ENCODE measurements at regions of chrX and their contacts with region 1.

Region 1: GRCh38 chrX:17374619-17375366 is at the start of gene NHS:
- DNase-seq: peak; percentile 61
- ATAC-seq: peak; percentile 80
- H3K4me3 ChIP-seq: peak within 1 kb of the TSS; percentile 62 to 65
- H3K27ac ChIP-seq: peak within 1 kb of the TSS; percentile 55; the same call in 1 of the 2 replicates
- H3K4me1 ChIP-seq: peaks cover 2 to 16% of the 10 kb centered on the region in 2 experiments; a peak in 2 of 4 replicates
- H3K27me3 ChIP-seq: no peaks in the 10 kb centered on the region
- CTCF ChIP-seq: peak in 2 of 3 experiments; percentile 41 to 49; a peak in 4 of 6 replicates
- POLR2A ChIP-seq: peak; percentile 22
- RAD21 ChIP-seq: no peak
- total RNA-seq, gene NHS: 5.7 TPM

Region 2: DNA sequence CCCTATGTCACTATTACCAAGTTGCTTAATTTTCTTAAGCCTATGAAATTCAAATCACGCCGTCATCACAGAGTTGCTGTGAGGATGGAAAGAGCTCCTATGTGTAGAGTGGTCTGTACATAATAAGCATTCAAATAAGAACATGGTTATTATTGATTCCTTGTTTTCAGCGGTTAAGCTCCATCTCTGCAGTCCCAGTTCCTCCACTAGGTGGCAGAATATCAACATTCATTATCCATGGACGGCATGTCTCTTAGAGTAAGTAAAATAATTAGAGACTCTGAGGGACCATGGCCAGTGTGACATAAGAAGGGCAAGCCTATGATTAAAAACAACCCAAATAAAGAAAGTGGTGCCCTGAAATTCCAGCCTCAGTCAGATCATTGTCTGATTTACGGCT is 132.3 kb before region 1 on chrX:
- CTCF ChIA-PET with region 1: no interaction called
- POLR2A ChIA-PET with region 1: no interaction called
- RAD21 ChIA-PET with region 1: no interaction called
- intact Hi-C with region 1: loop called (anchors 5 kb)
- DNase-seq: peak; percentile 34
- ATAC-seq: peak; percentile 79
- H3K4me3 ChIP-seq: no peak overlapping the region
- H3K27ac ChIP-seq: no peak overlapping the region
- H3K4me1 ChIP-seq: no peaks in the 10 kb centered on the region
- H3K27me3 ChIP-seq: no peaks in the 10 kb centered on the region
- CTCF ChIP-seq: peak; percentile 61 to 73 (median 67)
- POLR2A ChIP-seq: no peak
- RAD21 ChIP-seq: peak; percentile 74

Region 3: GRCh38 chrX:17413228-17413627 is 38.4 kb after region 1 on chrX:
- CTCF ChIA-PET with region 1: no interaction called
- POLR2A ChIA-PET with region 1: no interaction called
- RAD21 ChIA-PET with region 1: no interaction called
- intact Hi-C with region 1: loop called (anchors 5 kb)
- DNase-seq: peak; percentile 32
- ATAC-seq: peak; percentile 46; the same call in 1 of the 2 replicates
- H3K4me3 ChIP-seq: peak overlapping the region; percentile 16 to 46
- H3K27ac ChIP-seq: peak overlapping the region; percentile 49; the same call in 1 of the 2 replicates
- H3K4me1 ChIP-seq: peaks cover 26 to 63% of the 10 kb centered on the region in 2 experiments
- H3K27me3 ChIP-seq: no peaks in the 10 kb centered on the region
- CTCF ChIP-seq: no peak
- POLR2A ChIP-seq: no peak
- RAD21 ChIP-seq: no peak

Region 4: DNA sequence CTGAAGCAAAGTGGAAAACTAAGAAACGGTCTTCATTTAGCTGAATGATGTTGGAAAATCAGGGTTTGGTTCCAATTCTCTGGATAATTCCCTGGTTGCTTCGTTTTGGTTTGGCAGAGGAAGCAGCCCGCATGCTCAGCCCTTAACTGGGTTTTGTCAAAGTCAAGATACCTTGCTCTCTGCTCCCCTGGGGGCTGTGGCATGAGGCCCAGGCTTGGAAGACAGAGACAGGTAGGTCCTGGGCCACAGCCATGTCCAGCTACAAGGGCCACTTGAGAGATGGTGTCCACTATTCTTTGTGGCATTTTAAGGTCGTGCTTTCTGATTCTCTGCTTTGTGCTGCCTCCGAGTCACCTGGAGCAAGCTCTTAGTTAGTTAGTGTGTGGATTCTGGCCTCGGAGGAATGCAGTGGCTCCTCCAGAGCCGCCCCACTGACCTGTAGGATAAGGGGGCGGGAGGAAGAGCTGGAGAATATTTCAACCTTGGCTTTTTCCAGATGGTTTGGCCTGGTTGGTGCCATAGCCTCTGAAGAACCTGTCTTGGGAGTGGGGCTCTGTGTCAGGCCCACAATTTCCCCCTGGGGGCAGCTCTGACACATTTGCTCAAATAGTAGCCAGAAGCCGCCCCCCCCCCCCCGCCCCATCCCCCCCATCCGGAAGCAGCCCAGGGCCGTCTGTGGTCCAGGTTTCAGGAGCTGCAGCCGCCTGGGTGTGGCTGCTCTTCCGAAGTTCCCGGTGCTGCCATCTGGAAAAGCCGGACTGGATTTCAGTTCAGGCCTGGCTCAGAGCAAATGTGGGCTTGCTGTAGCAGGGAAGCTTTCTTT is 147.3 kb after region 1 on chrX:
- CTCF ChIA-PET with region 1: no interaction called
- POLR2A ChIA-PET with region 1: no interaction called
- RAD21 ChIA-PET with region 1: no interaction called
- intact Hi-C with region 1: loop called (anchors 1 kb)
- DNase-seq: peak; percentile 16
- ATAC-seq: peak; percentile 87
- H3K4me3 ChIP-seq: peak overlapping the region in 1 of 2 experiments; percentile 13; a peak in 1 of 4 replicates
- H3K27ac ChIP-seq: no peak overlapping the region
- H3K4me1 ChIP-seq: peaks cover 10 to 11% of the 10 kb centered on the region in 2 experiments; a peak in 3 of 4 replicates
- H3K27me3 ChIP-seq: no peaks in the 10 kb centered on the region
- CTCF ChIP-seq: no peak
- POLR2A ChIP-seq: no peak
- RAD21 ChIP-seq: no peak; the same call in 1 of the 2 replicates

Region 5: GRCh38 chrX:17590892-17591740 is 216.3 kb after region 1 on chrX:
- CTCF ChIA-PET with region 1: interaction called, 3 read pairs
- POLR2A ChIA-PET with region 1: no interaction called
- RAD21 ChIA-PET with region 1: no interaction called
- intact Hi-C with region 1: loop called (anchors 10 kb)
- DNase-seq: peak; percentile 49
- ATAC-seq: peak; percentile 84
- H3K4me3 ChIP-seq: no peak overlapping the region
- H3K27ac ChIP-seq: no peak overlapping the region
- H3K4me1 ChIP-seq: peaks cover 0 to 8% of the 10 kb centered on the region in 2 experiments; a peak in 2 of 4 replicates
- H3K27me3 ChIP-seq: no peaks in the 10 kb centered on the region
- CTCF ChIP-seq: peak; percentile 59 to 65 (median 63); a peak in 5 of 6 replicates
- POLR2A ChIP-seq: no peak
- RAD21 ChIP-seq: peak; percentile 85

Region 6: GRCh38 chrX:17689971-17690409 is 315.2 kb after region 1 on chrX:
- CTCF ChIA-PET with region 1: no interaction called
- POLR2A ChIA-PET with region 1: no interaction called
- RAD21 ChIA-PET with region 1: no interaction called
- intact Hi-C with region 1: loop called (anchors 5 kb)
- DNase-seq: peak; percentile 16
- ATAC-seq: peak; percentile 74; the same call in 1 of the 2 replicates
- H3K4me3 ChIP-seq: no peak overlapping the region
- H3K27ac ChIP-seq: no peak overlapping the region
- H3K4me1 ChIP-seq: no peaks in the 10 kb centered on the region
- H3K27me3 ChIP-seq: no peaks in the 10 kb centered on the region
- CTCF ChIP-seq: peak; percentile 47 to 55 (median 52); a peak in 5 of 6 replicates
- POLR2A ChIP-seq: no peak
- RAD21 ChIP-seq: peak; percentile 75